GM10248 (cell line): ENCODE measurements at regions of chr6 and their contacts with region 1.

Region 1: GRCh38 chr6:42104095-42104806 is 38.2 kb downstream of the C6orf132 start:
- DNase-seq: peak; percentile 90
- CTCF ChIP-seq: peak; percentile 82

Region 2: GRCh38 chr6:42075159-42075838 is 29.0 kb before region 1 on chr6:
- CTCF ChIA-PET with region 1: interaction called, 12 read pairs
- POLR2A ChIA-PET with region 1: no interaction called
- DNase-seq: peak; percentile 59
- CTCF ChIP-seq: peak; percentile 82

Region 3: GRCh38 chr6:42118162-42119001 is 14.1 kb after region 1 on chr6:
- CTCF ChIA-PET with region 1: interaction called, 26 read pairs
- POLR2A ChIA-PET with region 1: interaction called, 3 read pairs
- DNase-seq: no peak
- CTCF ChIP-seq: no peak

Region 4: GRCh38 chr6:42136508-42137193 is 32.4 kb after region 1 on chr6:
- CTCF ChIA-PET with region 1: interaction called, 22 read pairs
- POLR2A ChIA-PET with region 1: no interaction called
- DNase-seq: peak; percentile 82
- CTCF ChIP-seq: peak; percentile 39